Mammary epithelial cell (primary cell): ENCODE measurements at regions of chr1 and their contacts with region 1.

Region 1: GRCh38 chr1:204207136-204207616 is 6.6 kb downstream of the GOLT1A start:
- DNase-seq: peak; percentile 24
- H3K4me3 ChIP-seq: no peak overlapping the region
- H3K27ac ChIP-seq: no peak overlapping the region
- H3K4me1 ChIP-seq: peaks cover 3% of the 10 kb centered on the region
- H3K27me3 ChIP-seq: no peaks in the 10 kb centered on the region
- CTCF ChIP-seq: peak; percentile 79 to 95

Region 2: GRCh38 chr1:203861379-203862184 is 345.6 kb before region 1 on chr1 and contains the start of gene SNRPE:
- CTCF ChIA-PET with region 1: no interaction called
- dilution Hi-C with region 1: no loop called
- in situ Hi-C with region 1: no loop called
- intact Hi-C with region 1: loop called (anchors 1 kb)
- DNase-seq: peak; percentile 97
- H3K4me3 ChIP-seq: peak within 1 kb of the TSS; percentile 59 to 92 (median 74)
- H3K27ac ChIP-seq: peak within 1 kb of the TSS; percentile 82
- H3K4me1 ChIP-seq: peaks cover 22% of the 10 kb centered on the region
- H3K27me3 ChIP-seq: no peaks in the 10 kb centered on the region
- CTCF ChIP-seq: peak; percentile 80 to 94
- total RNA-seq, gene SNRPE: 21.7 to 131 TPM

Region 3: GRCh38 chr1:204171751-204172178 is 35.4 kb before region 1 on chr1:
- CTCF ChIA-PET with region 1: no interaction called
- dilution Hi-C with region 1: no loop called
- in situ Hi-C with region 1: loop called in 1 of 2 experiments (anchors 5 kb)
- intact Hi-C with region 1: no loop called
- DNase-seq: peak; percentile 98
- H3K4me3 ChIP-seq: no peak overlapping the region
- H3K27ac ChIP-seq: peak overlapping the region; percentile 62
- H3K4me1 ChIP-seq: peaks cover 21% of the 10 kb centered on the region
- H3K27me3 ChIP-seq: no peaks in the 10 kb centered on the region
- CTCF ChIP-seq: no peak

Region 4: DNA sequence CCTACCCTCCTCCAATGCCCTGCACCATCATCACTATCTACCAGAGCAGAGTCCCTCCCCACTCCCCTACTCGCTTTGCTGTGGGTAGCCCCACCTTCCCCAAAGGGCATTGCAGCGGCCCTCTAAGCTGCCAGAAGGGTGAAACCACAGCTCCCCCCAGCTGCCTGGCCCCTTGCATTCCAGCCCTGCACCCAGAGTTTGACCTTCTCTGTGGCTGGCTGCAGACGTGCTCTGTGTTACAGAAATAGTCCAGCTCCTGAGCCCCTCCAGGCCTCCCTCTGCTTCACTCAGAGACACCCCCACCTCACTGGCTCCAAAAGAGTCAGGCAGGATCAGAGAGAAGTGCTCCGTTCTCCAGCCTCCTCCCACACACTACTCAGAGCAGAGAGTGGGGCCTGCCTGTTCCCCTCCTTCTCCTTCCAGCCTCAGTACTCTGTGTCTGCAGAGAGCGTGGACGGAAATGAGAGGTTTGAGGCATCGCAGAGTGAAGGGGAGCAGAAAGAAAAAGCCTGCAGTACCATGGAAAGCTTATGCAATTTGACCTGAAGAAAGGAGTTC is 89.3 kb after region 1 on chr1:
- CTCF ChIA-PET with region 1: no interaction called
- dilution Hi-C with region 1: no loop called
- in situ Hi-C with region 1: no loop called
- intact Hi-C with region 1: no loop called
- DNase-seq: no peak
- H3K4me3 ChIP-seq: no peak overlapping the region
- H3K27ac ChIP-seq: no peak overlapping the region
- H3K4me1 ChIP-seq: peaks cover 44% of the 10 kb centered on the region
- H3K27me3 ChIP-seq: no peaks in the 10 kb centered on the region
- CTCF ChIP-seq: no peak